ENCODE measurements at regions of chr9 and their contacts with region 1.

Region 1: DNA sequence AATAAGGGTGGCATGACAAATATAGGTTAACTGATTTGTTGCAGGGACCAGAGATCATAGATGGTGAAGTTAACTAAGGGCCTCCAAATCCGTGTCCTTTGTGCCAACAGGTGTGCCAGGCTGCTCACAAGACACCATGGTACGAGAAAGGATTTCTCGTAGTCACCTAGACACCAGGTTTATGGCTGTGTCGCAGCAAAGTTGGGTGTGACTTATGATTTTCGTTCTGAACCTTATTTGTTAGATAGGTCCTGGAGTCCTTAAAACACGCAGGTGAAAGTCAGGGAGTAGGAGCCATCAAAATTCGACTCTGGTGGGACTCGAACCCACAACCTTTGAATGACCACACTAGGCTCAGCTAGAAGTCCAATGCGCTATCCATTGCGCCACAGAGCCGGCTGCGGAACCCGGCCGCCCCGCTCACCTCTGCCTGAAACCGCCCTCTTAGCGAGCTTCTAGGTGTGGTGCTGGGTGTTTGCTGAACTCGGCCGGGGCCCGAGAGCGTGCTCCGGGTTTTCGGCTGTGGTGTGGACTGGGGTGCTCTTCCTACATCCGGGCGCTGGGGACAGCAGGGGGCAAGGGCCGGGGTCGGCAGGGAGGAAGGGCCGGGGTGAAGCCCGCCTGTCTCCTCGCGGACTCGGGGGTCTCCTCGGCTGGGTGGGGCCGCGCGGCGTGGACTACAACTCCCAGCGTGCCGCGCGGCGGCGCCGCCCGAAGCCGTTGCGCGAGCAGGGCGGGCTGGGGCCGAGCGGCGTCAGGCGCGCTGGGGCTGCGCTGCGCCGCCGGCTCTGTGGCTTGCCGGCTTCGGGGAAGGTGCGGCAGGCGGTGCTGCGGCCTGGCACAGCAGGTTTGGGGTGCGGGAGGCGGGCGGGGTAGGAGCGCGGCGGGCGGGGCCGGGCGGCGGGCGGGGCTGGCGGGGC is at the start of gene SLC27A4:
- DNase-seq: peak; percentile 61
- ATAC-seq: peak; percentile 91
- H3K4me3 ChIP-seq: peak within 1 kb of the TSS; percentile 87
- H3K27ac ChIP-seq: peak within 1 kb of the TSS; percentile 24; the same call in 1 of the 2 replicates
- H3K4me1 ChIP-seq: no peaks in the 10 kb centered on the region
- H3K27me3 ChIP-seq: no peaks in the 10 kb centered on the region
- CTCF ChIP-seq: no peak
- EP300 ChIP-seq: no peak
- POLR2A ChIP-seq: peak; percentile 41; the same call in 1 of the 2 replicates
- RAD21 ChIP-seq: no peak
- polyA plus RNA-seq, gene SLC27A4: 0.13 to 1.1 TPM

Region 2: GRCh38 chr9:128296337-128297220 is 43.5 kb before region 1 on chr9:
- CTCF ChIA-PET with region 1: interaction called, 34 read pairs
- POLR2A ChIA-PET with region 1: no interaction called
- RAD21 ChIA-PET with region 1: interaction called, 13 read pairs
- SMC1A ChIA-PET with region 1: interaction called, 23 read pairs
- in situ Hi-C with region 1: no loop called
- intact Hi-C with region 1: loop called (anchors 1 kb)
- DNase-seq: no peak
- ATAC-seq: no peak
- H3K4me3 ChIP-seq: no peak overlapping the region
- H3K27ac ChIP-seq: no peak overlapping the region
- H3K4me1 ChIP-seq: no peaks in the 10 kb centered on the region
- H3K27me3 ChIP-seq: no peaks in the 10 kb centered on the region
- CTCF ChIP-seq: no peak
- EP300 ChIP-seq: no peak
- POLR2A ChIP-seq: no peak
- RAD21 ChIP-seq: no peak